Activated T-helper 1 cell treated with anti-CD3 and anti-CD28 coated beads, Interleukin-12 subunit alpha, Interleukin-12 subunit beta, Interleukin-2, Interleukin-4 antibody, amounts not matched to agents 30 ng/mL and 10 ng/mL and 1 ng/mL, durations not matched to agents 14 hours and 24 hours and 36 hours (primary cell): ENCODE measurements at regions of chr10 and their contacts with region 1.

Region 1: GRCh38 chr10:124388823-124389612 is 29.7 kb downstream of the OAT start:
- DNase-seq: peak; percentile 88
- H3K4me3 Mint-ChIP-seq: peak overlapping the region; percentile 57
- H3K27ac Mint-ChIP-seq: no peak overlapping the region
- H3K4me1 Mint-ChIP-seq: no peaks in the 10 kb centered on the region
- H3K27me3 Mint-ChIP-seq: peaks cover 8% of the 10 kb centered on the region

Region 2: GRCh38 chr10:123582084-123582989 is 806.7 kb before region 1 on chr10:
- intact Hi-C with region 1: loop called (anchors 1 kb)
- DNase-seq: peak; percentile 46
- H3K4me3 Mint-ChIP-seq: no peak overlapping the region
- H3K27ac Mint-ChIP-seq: no peak overlapping the region
- H3K4me1 Mint-ChIP-seq: no peaks in the 10 kb centered on the region
- H3K27me3 Mint-ChIP-seq: peaks cover 14% of the 10 kb centered on the region

Region 3: DNA sequence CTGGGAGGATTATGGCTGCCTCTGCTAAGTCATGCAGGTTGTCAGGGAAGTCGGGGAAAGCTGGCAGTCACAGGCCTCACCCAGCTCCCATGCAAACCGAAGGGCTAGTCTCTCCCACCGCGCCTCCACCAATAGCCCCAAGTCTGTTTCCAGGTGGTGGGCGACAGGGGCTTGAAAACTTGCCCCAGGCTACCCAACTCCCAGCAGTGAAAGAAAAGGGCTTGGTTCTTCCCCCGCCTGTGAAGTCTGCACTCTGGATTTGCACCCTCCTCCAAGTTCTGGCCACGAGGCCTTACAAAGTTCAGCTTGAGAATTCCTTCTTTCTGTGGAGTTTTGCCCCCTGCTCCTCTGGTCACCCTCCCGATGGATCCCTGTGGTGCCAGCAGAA is 195.7 kb before region 1 on chr10:
- intact Hi-C with region 1: loop called (anchors 2 kb)
- DNase-seq: no peak
- H3K4me3 Mint-ChIP-seq: no peak overlapping the region
- H3K27ac Mint-ChIP-seq: no peak overlapping the region
- H3K4me1 Mint-ChIP-seq: no peaks in the 10 kb centered on the region
- H3K27me3 Mint-ChIP-seq: peaks cover 20% of the 10 kb centered on the region

Region 4: DNA sequence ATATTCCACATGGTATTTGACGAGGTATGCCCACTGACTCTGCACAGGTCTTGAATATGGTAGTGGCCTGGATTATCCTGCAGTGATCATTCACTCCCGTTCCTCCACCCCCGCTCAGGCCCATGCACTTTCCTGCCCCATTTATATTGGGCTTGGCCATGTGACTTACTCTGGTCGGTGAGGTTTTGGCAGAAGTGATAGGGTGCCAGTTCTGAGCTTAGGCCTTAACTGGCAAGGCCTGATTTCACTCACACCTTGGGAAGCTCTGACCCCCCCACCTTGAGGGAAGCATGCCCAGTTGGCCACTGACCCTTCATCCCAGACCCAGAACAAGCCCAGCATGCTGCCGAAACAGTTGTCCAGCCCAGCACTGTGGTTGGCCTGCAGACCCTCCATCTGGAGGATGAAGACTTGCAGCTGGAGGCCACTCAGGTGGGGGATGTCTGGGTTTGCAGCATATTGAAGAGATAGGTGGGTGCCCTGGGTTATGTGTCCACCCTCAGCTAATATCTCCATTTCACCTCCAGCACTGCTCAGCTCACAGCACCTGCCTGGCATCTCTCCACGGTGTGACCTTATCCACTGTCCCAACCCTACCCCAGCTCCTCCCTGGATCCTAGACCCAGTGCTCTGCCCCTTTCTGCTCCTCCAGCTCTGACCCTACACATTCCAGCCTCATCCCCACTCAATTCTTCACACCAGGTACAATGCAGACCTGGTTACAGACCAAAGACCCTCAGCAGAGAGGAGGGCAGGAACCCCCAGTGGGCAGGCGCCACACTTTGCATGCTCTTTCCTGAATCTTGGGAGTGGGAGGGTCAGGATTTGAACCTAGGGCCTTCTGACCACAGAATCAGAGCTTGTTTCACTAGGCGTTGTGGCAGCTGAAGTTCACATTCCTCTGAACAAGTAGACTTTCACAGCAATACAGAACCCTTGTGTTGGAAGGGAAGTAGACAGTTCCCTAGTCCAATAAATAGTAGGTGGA is 157.6 kb before region 1 on chr10:
- intact Hi-C with region 1: loop called (anchors 1 kb)
- DNase-seq: peak; percentile 52
- H3K4me3 Mint-ChIP-seq: no peak overlapping the region
- H3K27ac Mint-ChIP-seq: peak overlapping the region; percentile 62
- H3K4me1 Mint-ChIP-seq: no peaks in the 10 kb centered on the region
- H3K27me3 Mint-ChIP-seq: no peaks in the 10 kb centered on the region

Region 5: GRCh38 chr10:124418726-124419501 is 29.9 kb after region 1 on chr10 and contains the start of gene OAT:
- intact Hi-C with region 1: loop called (anchors 1 kb)
- DNase-seq: peak; percentile 95
- H3K4me3 Mint-ChIP-seq: peak within 1 kb of the TSS; percentile 81
- H3K27ac Mint-ChIP-seq: peak within 1 kb of the TSS; percentile 29
- H3K4me1 Mint-ChIP-seq: peaks cover 12% of the 10 kb centered on the region
- H3K27me3 Mint-ChIP-seq: peaks cover 22% of the 10 kb centered on the region
- total RNA-seq, gene OAT: 35.6 and 37.9 TPM in 2 replicates

Region 6: GRCh38 chr10:124450012-124450781 is 61.2 kb after region 1 on chr10 and contains the start of gene NKX1-2:
- intact Hi-C with region 1: no loop called
- DNase-seq: no peak
- H3K4me3 Mint-ChIP-seq: no peak within 1 kb of the TSS
- H3K27ac Mint-ChIP-seq: peak within 1 kb of the TSS; percentile 55
- H3K4me1 Mint-ChIP-seq: peaks cover 6% of the 10 kb centered on the region
- H3K27me3 Mint-ChIP-seq: peaks cover 87% of the 10 kb centered on the region
- total RNA-seq, gene NKX1-2: not detected in 2 replicates

Region 7: GRCh38 chr10:125719146-125720001 is 1330.4 kb after region 1 on chr10 and contains the start of gene EDRF1:
- intact Hi-C with region 1: loop called (anchors 1 kb)
- DNase-seq: peak; percentile 100
- H3K4me3 Mint-ChIP-seq: peak within 1 kb of the TSS; percentile 98
- H3K27ac Mint-ChIP-seq: peak within 1 kb of the TSS; percentile 98
- H3K4me1 Mint-ChIP-seq: peaks cover 21% of the 10 kb centered on the region
- H3K27me3 Mint-ChIP-seq: no peaks in the 10 kb centered on the region
- total RNA-seq, gene EDRF1: 43.4 and 43.9 TPM in 2 replicates